CD4-positive, alpha-beta memory T cell (primary cell): ENCODE measurements at regions of chr21 and their contacts with region 1.

Region 1: GRCh38 chr21:36113647-36114428 is 21.0 kb upstream of the CBR3 start:
- DNase-seq: peak in 4 of 5 donors; percentile 56 to 85 (median 68)
- H3K4me3 ChIP-seq: peak overlapping the region; percentile 63 to 80
- H3K4me3 Mint-ChIP-seq: peak overlapping the region; percentile 81 to 98 (median 92)
- H3K27ac ChIP-seq: peak overlapping the region; percentile 49
- H3K27ac Mint-ChIP-seq: peak overlapping the region; percentile 45 to 97 (median 90)
- H3K4me1 ChIP-seq: peaks cover 29% of the 10 kb centered on the region
- H3K4me1 Mint-ChIP-seq: peaks cover 17 to 33% (median 21%) of the 10 kb centered on the region in 4 donors
- H3K27me3 ChIP-seq: no peaks in the 10 kb centered on the region
- H3K27me3 Mint-ChIP-seq: peaks cover 2% of the 10 kb centered on the region in 2 donors

Region 2: GRCh38 chr21:34693192-34693810 is 1420.5 kb before region 1 on chr21:
- CTCF ChIA-PET with region 1: interaction called, 3 read pairs
- POLR2A ChIA-PET with region 1: no interaction called
- intact Hi-C with region 1: loop called (anchors 1 kb)
- DNase-seq: peak in 4 of 5 donors; percentile 42 to 57 (median 50)
- H3K4me3 ChIP-seq: no peak overlapping the region
- H3K4me3 Mint-ChIP-seq: no peak overlapping the region
- H3K27ac ChIP-seq: no peak overlapping the region
- H3K27ac Mint-ChIP-seq: no peak overlapping the region
- H3K4me1 ChIP-seq: no peaks in the 10 kb centered on the region
- H3K4me1 Mint-ChIP-seq: peaks cover 0 to 4% (median 0%) of the 10 kb centered on the region in 4 donors
- H3K27me3 ChIP-seq: no peaks in the 10 kb centered on the region
- H3K27me3 Mint-ChIP-seq: peaks cover 13 to 27% of the 10 kb centered on the region in 2 donors

Region 3: DNA sequence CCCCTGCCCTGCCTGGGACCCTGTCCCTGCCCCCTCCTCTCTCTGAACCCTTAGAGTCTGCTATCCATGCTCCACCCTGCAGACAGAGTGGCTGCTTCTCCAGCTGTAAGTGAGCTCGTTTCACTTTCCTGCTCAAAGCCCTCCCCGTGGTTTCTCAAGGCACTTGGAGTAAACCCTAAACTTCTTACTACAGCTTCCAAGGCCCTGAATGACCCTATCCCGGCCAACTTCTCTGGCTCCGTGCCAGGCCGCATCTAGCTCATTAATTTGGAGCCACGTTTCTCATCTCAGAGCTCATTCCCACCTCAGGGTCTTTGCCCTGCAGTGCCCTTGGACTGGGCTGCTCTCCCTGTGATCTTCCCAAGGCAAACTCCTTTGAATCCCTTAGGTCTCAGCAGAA is 829.6 kb before region 1 on chr21:
- CTCF ChIA-PET with region 1: no interaction called
- POLR2A ChIA-PET with region 1: no interaction called
- intact Hi-C with region 1: no loop called
- DNase-seq: peak in 1 of 5 donors; percentile 26
- H3K4me3 ChIP-seq: no peak overlapping the region
- H3K4me3 Mint-ChIP-seq: no peak overlapping the region
- H3K27ac ChIP-seq: no peak overlapping the region
- H3K27ac Mint-ChIP-seq: peak overlapping the region in 1 of 7 donors; percentile 57
- H3K4me1 ChIP-seq: no peaks in the 10 kb centered on the region
- H3K4me1 Mint-ChIP-seq: peaks cover 0 to 2% (median 0%) of the 10 kb centered on the region in 4 donors
- H3K27me3 ChIP-seq: no peaks in the 10 kb centered on the region
- H3K27me3 Mint-ChIP-seq: no peaks in the 10 kb centered on the region

Region 4: GRCh38 chr21:35400233-35400957 is 713.4 kb before region 1 on chr21:
- CTCF ChIA-PET with region 1: no interaction called
- POLR2A ChIA-PET with region 1: no interaction called
- intact Hi-C with region 1: loop called (anchors 2 kb)
- DNase-seq: peak; percentile 39 to 66 (median 63)
- H3K4me3 ChIP-seq: no peak overlapping the region
- H3K4me3 Mint-ChIP-seq: no peak overlapping the region
- H3K27ac ChIP-seq: no peak overlapping the region
- H3K27ac Mint-ChIP-seq: no peak overlapping the region
- H3K4me1 ChIP-seq: no peaks in the 10 kb centered on the region
- H3K4me1 Mint-ChIP-seq: peaks cover 0 to 2% (median under 1%) of the 10 kb centered on the region in 4 donors
- H3K27me3 ChIP-seq: no peaks in the 10 kb centered on the region
- H3K27me3 Mint-ChIP-seq: peaks cover 1 to 3% of the 10 kb centered on the region in 2 donors

Region 5: GRCh38 chr21:36028127-36029069 is 85.4 kb before region 1 on chr21:
- CTCF ChIA-PET with region 1: interaction called, 21 read pairs
- POLR2A ChIA-PET with region 1: interaction called, 3 read pairs
- intact Hi-C with region 1: no loop called
- DNase-seq: peak; percentile 51 to 65 (median 57)
- H3K4me3 ChIP-seq: no peak overlapping the region
- H3K4me3 Mint-ChIP-seq: peak overlapping the region in 1 of 8 donors; percentile 9
- H3K27ac ChIP-seq: no peak overlapping the region
- H3K27ac Mint-ChIP-seq: peak overlapping the region in 2 of 7 donors; percentile 4 to 30
- H3K4me1 ChIP-seq: peaks cover 3% of the 10 kb centered on the region
- H3K4me1 Mint-ChIP-seq: peaks cover 4 to 7% (median 5%) of the 10 kb centered on the region in 4 donors
- H3K27me3 ChIP-seq: no peaks in the 10 kb centered on the region
- H3K27me3 Mint-ChIP-seq: no peaks in the 10 kb centered on the region

Region 6: GRCh38 chr21:36069713-36070573 is 43.9 kb before region 1 on chr21 and contains the start of gene CBR1:
- CTCF ChIA-PET with region 1: interaction called, 21 read pairs
- POLR2A ChIA-PET with region 1: interaction called, 23 read pairs
- intact Hi-C with region 1: no loop called
- DNase-seq: peak; percentile 85 to 87 (median 87)
- H3K4me3 ChIP-seq: peak within 1 kb of the TSS; percentile 51 to 87
- H3K4me3 Mint-ChIP-seq: peak within 1 kb of the TSS; percentile 90 to 95 (median 92)
- H3K27ac ChIP-seq: peak within 1 kb of the TSS; percentile 69
- H3K27ac Mint-ChIP-seq: peak within 1 kb of the TSS; percentile 73 to 93 (median 85)
- H3K4me1 ChIP-seq: peaks cover 33% of the 10 kb centered on the region
- H3K4me1 Mint-ChIP-seq: peaks cover 28 to 43% (median 35%) of the 10 kb centered on the region in 4 donors
- H3K27me3 ChIP-seq: no peaks in the 10 kb centered on the region
- H3K27me3 Mint-ChIP-seq: no peaks in the 10 kb centered on the region
- total RNA-seq, gene CBR1: 23.0 to 25.2 TPM

Region 7: GRCh38 chr21:36135391-36136102 is 21.7 kb after region 1 on chr21:
- CTCF ChIA-PET with region 1: interaction called, 21 read pairs
- POLR2A ChIA-PET with region 1: interaction called, 19 read pairs
- intact Hi-C with region 1: no loop called
- DNase-seq: peak in 4 of 5 donors; percentile 49 to 61 (median 53)
- H3K4me3 ChIP-seq: peak overlapping the region; percentile 58 to 86
- H3K4me3 Mint-ChIP-seq: peak overlapping the region; percentile 89 to 96 (median 95)
- H3K27ac ChIP-seq: peak overlapping the region; percentile 51
- H3K27ac Mint-ChIP-seq: peak overlapping the region; percentile 86 to 95 (median 92)
- H3K4me1 ChIP-seq: peaks cover 25% of the 10 kb centered on the region
- H3K4me1 Mint-ChIP-seq: peaks cover 12 to 35% (median 21%) of the 10 kb centered on the region in 4 donors
- H3K27me3 ChIP-seq: no peaks in the 10 kb centered on the region
- H3K27me3 Mint-ChIP-seq: no peaks in the 10 kb centered on the region

Region 8: DNA sequence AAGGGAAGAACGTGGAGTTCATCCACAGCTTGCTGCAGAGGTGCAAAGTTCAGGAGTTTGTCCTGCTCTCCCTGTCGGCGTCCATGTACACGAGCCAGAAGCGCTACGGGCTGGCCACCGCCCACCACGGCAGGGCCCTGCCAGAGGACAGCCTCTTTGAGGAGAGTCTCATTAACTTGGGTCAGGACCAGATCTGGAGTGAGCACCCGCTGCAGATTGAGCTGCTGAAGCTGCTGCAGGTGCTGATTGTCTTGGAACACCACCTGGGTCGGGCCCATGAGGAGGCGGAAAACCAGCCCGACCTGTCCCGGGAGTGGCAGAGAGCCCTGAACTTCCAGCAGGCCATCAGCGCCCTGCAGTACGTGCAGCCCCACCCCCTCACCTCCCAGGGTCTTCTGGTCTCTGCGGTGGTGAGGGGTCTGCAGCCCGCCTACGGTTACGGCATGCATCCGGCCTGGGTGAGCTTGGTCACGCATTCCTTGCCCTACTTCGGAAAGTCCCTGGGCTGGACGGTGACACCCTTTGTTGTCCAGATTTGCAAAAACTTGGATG is 132.3 kb after region 1 on chr21:
- CTCF ChIA-PET with region 1: no interaction called
- POLR2A ChIA-PET with region 1: no interaction called
- intact Hi-C with region 1: no loop called
- DNase-seq: no peak
- H3K4me3 ChIP-seq: no peak overlapping the region
- H3K4me3 Mint-ChIP-seq: no peak overlapping the region
- H3K27ac ChIP-seq: no peak overlapping the region
- H3K27ac Mint-ChIP-seq: peak overlapping the region in 1 of 7 donors; percentile 62
- H3K4me1 ChIP-seq: no peaks in the 10 kb centered on the region
- H3K4me1 Mint-ChIP-seq: peaks cover 0 to 4% (median 1%) of the 10 kb centered on the region in 4 donors
- H3K27me3 ChIP-seq: no peaks in the 10 kb centered on the region
- H3K27me3 Mint-ChIP-seq: no peaks in the 10 kb centered on the region